Activated CD4-positive, alpha-beta memory T cell treated with anti-CD3 and anti-CD28 coated beads for 36 hours (primary cell): ENCODE measurements at regions of chr14 and their contacts with region 1.

Region 1: DNA sequence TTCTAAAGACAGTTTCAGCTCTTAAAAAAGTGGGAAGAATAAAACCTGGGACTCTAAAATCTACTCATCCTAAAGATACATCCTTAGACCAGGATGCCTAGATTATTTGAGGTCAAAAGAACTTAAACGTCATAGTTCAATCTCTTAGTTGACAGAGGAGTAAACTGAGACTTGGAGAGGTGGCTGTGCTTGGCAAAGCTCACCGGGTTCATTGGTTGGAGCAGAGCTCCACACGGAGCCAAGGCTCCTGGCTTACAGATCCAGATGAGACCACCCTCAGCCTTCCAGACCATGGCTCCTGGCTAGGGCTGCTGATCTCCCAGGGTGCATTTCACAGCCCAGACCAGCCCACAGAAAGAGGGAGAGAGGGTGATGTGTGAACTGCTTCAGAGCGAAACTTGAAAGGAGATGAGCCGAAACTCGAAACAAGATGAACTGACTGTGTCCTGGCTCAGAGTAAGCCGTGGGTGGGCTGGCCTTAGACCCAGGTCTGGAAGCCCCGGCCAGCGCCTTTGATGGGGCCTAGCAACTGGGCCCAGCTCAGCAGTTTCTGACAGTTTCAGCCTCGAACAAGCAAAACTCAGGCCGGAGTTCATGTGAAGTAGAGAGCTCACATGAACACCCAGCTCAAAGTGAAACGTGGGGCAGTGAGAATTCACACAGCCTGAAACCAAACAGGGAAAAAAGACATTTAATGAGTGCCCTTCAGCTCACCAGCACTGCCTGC is 1044.8 kb downstream of the BCL11B start:
- DNase-seq: peak; percentile 78
- H3K4me3 Mint-ChIP-seq: peak overlapping the region; percentile 11
- H3K27ac Mint-ChIP-seq: peak overlapping the region; percentile 91
- H3K4me1 Mint-ChIP-seq: peaks cover 86% of the 10 kb centered on the region
- H3K27me3 Mint-ChIP-seq: no peaks in the 10 kb centered on the region

Region 2: DNA sequence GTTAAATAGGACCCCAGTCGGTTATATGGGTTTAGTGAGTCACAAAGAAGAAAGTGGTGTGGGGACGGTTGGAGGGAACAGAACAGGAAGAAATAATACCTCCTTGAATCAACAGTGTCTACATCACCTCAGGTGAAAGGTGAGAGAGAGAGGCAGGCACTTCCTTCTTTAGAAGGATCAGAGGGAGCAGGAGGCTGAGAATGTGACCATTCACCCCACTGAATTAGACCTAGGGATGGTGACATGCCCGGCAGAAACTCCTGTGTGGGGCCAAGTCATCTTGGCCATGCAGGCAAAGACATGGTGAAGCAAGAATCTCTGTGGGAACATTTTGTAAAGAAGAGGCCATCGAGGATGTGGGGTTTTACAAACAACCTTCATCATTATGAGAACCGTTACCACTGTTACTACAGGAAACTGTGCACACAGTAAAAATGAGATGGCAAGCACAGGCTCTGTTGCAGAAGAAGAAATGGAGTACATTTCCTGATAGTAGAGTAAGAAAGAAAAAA is 233.1 kb before region 1 on chr14:
- CTCF ChIA-PET with region 1: no interaction called
- POLR2A ChIA-PET with region 1: no interaction called
- intact Hi-C with region 1: loop called (anchors 1 kb)
- DNase-seq: peak; percentile 59
- H3K4me3 Mint-ChIP-seq: peak overlapping the region; percentile 34
- H3K27ac Mint-ChIP-seq: peak overlapping the region; percentile 94
- H3K4me1 Mint-ChIP-seq: peaks cover 55% of the 10 kb centered on the region
- H3K27me3 Mint-ChIP-seq: no peaks in the 10 kb centered on the region

Region 3: GRCh38 chr14:98167705-98168104 is 59.5 kb before region 1 on chr14:
- CTCF ChIA-PET with region 1: interaction called, 4 read pairs
- POLR2A ChIA-PET with region 1: interaction called, 16 read pairs
- intact Hi-C with region 1: no loop called
- DNase-seq: peak; percentile 54
- H3K4me3 Mint-ChIP-seq: peak overlapping the region; percentile 17
- H3K27ac Mint-ChIP-seq: peak overlapping the region; percentile 97
- H3K4me1 Mint-ChIP-seq: peaks cover 67% of the 10 kb centered on the region
- H3K27me3 Mint-ChIP-seq: no peaks in the 10 kb centered on the region

Region 4: DNA sequence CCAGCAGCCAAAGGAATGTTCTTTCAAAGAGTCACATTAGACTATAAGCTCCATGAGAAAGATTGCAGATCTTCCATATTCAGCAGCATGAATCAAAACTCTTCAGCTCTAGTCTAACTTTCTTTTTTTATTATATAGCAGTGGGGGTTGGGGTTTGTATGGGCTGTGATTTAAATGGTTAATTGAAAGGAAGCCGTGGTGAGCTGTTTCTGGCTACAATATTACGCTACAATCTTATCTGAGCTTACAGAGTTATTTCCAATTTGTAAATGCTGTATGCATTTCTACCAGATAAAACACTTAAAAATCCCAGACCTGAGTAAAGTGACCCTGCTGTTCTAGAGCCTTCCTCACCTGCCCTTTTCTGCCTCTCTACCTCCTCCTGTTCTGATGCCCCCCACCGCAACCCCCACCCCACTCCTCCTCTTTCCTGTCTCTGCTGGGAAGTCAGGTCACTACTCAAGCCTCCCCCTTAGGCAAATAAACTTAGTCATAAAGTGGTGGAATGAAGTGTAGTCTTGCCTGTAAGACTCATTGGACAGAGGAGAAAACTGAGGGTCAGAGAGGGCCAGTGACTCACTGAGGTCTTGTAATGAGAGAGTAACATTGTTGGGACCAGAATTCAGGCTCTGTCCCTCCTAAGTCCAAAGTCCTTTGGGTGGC is 44.6 kb before region 1 on chr14:
- CTCF ChIA-PET with region 1: interaction called, 5 read pairs
- POLR2A ChIA-PET with region 1: interaction called, 6 read pairs
- intact Hi-C with region 1: loop called (anchors 1 kb)
- DNase-seq: peak; percentile 82
- H3K4me3 Mint-ChIP-seq: peak overlapping the region; percentile 52
- H3K27ac Mint-ChIP-seq: peak overlapping the region; percentile 100
- H3K4me1 Mint-ChIP-seq: peaks cover 94% of the 10 kb centered on the region
- H3K27me3 Mint-ChIP-seq: no peaks in the 10 kb centered on the region

Region 5: DNA sequence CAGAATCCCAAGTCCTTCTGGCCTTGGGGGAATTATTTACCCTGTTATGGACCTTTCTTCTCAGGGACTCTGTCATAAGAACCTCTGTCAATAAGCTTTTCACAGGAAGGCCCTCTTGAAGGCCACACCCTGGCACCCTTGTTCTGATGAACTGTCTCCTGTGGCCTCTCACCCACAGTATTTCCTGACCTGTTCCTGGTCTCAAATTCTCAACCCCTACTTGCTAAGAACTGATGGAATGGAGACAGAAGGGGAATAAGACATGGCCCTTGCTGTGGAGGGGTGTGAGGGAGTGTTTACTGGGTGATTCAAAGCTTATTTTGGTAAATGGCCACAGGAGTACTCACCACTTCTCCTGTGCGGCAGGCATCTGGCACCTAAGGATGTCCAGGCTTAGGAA is 38.1 kb before region 1 on chr14:
- CTCF ChIA-PET with region 1: interaction called, 5 read pairs
- POLR2A ChIA-PET with region 1: interaction called, 6 read pairs
- intact Hi-C with region 1: loop called (anchors 1 kb)
- DNase-seq: peak; percentile 65
- H3K4me3 Mint-ChIP-seq: peak overlapping the region; percentile 75
- H3K27ac Mint-ChIP-seq: peak overlapping the region; percentile 100
- H3K4me1 Mint-ChIP-seq: peaks cover 94% of the 10 kb centered on the region
- H3K27me3 Mint-ChIP-seq: no peaks in the 10 kb centered on the region

Region 6: GRCh38 chr14:98198385-98198784 is 28.8 kb before region 1 on chr14:
- CTCF ChIA-PET with region 1: no interaction called
- POLR2A ChIA-PET with region 1: interaction called, 3 read pairs
- intact Hi-C with region 1: loop called (anchors 1 kb)
- DNase-seq: peak; percentile 72
- H3K4me3 Mint-ChIP-seq: peak overlapping the region; percentile 10
- H3K27ac Mint-ChIP-seq: peak overlapping the region; percentile 77
- H3K4me1 Mint-ChIP-seq: peaks cover 66% of the 10 kb centered on the region
- H3K27me3 Mint-ChIP-seq: no peaks in the 10 kb centered on the region

Region 7: GRCh38 chr14:98591161-98591560 is 364.0 kb after region 1 on chr14:
- CTCF ChIA-PET with region 1: no interaction called
- POLR2A ChIA-PET with region 1: no interaction called
- intact Hi-C with region 1: no loop called
- DNase-seq: no peak
- H3K4me3 Mint-ChIP-seq: no peak overlapping the region
- H3K27ac Mint-ChIP-seq: no peak overlapping the region
- H3K4me1 Mint-ChIP-seq: no peaks in the 10 kb centered on the region
- H3K27me3 Mint-ChIP-seq: no peaks in the 10 kb centered on the region

Region 8: DNA sequence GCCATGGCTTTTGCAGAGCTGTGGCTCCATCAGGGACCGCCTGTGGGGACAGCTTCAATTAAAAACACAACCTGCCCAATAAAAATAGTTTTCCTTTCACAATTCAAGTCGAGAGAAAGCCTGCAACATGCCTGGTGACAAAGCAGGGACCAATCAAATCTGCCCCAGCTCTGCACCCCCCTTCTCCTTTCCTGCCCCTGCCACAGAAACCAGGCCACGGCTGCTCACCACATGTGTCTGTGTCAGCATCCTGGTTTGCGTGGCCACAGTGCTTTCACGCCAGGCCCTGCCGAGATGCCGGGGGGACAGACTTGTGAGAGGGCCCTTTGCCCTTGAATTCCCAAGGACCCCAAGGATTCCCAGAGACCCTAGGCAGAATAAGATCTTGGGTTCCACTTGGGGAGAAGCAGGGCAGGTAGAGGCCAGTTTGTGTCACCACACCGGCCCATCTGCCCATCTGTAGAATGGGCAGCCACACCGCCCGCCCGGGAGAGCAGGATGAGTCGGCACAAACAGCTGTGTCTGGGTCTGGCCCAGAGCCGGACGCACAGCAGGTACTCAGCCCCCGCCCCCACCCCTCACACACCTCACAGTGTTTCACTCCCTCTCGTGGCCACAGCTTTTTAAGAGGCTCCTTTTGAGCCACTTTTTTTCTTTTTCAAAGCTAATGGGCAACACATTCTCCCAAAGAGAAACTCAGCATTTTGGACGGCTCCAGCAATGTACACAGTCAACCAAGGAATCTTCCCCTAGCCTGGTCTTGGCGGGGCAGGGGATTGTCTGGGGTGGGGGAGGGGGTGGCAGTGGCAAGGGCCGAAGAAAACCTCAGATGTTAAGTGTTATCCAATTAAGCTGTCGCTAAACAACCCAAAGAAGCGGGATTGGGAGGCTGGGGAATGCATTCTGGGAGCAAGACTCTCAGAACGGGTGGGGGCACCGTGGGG is 1003.3 kb after region 1 on chr14:
- CTCF ChIA-PET with region 1: no interaction called
- POLR2A ChIA-PET with region 1: no interaction called
- intact Hi-C with region 1: loop called (anchors 5 kb)
- DNase-seq: peak; percentile 94
- H3K4me3 Mint-ChIP-seq: peak overlapping the region; percentile 68
- H3K27ac Mint-ChIP-seq: peak overlapping the region; percentile 96
- H3K4me1 Mint-ChIP-seq: peaks cover 95% of the 10 kb centered on the region
- H3K27me3 Mint-ChIP-seq: no peaks in the 10 kb centered on the region